ENCODE measurements at regions of chr14 and their contacts with region 1.

Region 1: DNA sequence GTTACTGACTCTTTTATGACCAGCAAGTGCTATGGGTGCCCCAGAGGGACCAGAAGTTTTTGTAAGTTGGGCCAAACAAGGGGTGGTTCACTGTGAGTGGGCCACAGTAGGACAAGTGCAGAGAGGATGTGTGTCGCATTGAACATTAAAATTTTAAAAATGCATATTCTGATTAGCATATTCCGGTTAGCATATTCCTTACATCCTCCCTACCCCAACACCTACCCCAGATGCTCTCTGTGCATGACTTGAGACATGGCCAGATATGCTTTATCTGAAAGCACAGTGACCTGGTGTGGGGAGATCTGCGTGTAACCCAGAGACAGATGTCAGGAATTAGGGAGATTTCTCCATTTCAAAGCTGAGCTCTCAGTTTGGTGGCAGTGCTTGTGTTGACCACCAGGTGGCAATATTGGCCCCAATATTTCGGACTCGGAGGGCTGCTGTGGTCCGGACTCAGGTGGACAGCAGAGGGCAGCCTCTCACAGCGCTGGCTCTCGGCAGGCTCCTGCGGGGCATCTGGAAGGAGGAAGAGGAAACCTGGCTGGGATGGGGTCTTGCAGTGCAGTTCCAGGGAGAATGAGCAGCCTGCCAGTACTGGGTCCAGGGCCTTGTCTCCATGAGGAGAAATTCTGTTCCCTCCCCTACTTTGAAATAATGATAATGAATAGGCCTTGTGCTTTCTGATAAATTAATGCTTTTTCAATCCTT is 1.6 kb upstream of the CEBPE start:
- DNase-seq: peak; percentile 70 to 89
- H3K4me3 ChIP-seq: no peak overlapping the region
- H3K27ac ChIP-seq: no peak overlapping the region
- H3K4me1 ChIP-seq: peaks cover 0 to 11% (median 3%) of the 10 kb centered on the region in 4 experiments; a peak in 5 of 7 replicates
- H3K27me3 ChIP-seq: no peaks in the 10 kb centered on the region
- CTCF ChIP-seq: peak; percentile 99 to 100 (median 100)
- EP300 ChIP-seq: peak in 1 of 2 experiments; percentile 22; a peak in 1 of 3 replicates
- POLR2A ChIP-seq: no peak
- RAD21 ChIP-seq: peak; percentile 100

Region 2: DNA sequence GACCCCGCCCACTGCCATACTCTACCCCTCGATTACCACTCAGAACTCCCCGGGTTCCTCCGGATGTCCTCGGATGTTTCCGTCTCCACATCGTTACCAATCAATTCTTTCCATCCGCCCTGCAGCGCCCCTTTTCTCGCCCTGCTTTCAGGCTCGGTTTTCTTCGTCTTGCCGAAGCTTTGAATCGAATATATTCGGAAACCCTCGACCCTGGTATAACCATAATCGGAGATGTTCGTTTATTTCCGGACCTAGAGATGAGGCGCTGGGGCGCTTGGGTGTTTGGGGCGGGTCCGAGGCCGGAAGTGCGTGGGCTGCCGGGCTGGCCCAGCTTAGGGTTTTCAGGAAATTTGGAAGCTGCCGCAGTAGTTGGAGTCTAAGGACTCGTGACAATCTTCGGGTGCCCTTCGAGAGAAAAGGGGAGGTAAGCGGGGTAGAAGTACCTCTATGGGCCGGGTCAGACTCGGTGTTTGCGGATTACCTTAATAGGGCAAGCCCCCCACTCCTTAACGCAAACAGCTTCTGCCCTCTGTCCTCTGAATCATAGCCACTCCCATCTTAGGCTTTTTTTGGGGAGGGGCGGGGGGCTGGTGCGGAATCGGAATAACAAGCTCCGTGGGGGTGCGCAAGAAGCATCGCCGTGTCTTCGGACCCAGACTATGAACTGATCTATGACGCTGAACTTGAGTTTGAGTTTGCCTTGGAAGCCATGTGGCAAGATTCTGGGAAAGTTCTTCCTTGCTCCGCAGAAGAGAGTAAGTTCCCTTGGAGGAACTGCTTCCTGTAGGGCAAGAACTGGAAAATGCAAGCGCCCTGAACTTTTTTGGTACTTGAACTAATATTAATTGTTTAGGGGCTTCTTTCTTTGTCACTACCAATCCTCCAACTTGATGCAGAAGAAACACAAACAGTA is 25.2 kb before region 1 on chr14 and contains the start of gene C14orf119:
- CTCF ChIA-PET with region 1: interaction called, 33 read pairs
- POLR2A ChIA-PET with region 1: interaction called, 13 read pairs
- DNase-seq: peak in 1 of 2 experiments; percentile 96
- H3K4me3 ChIP-seq: peak within 1 kb of the TSS; percentile 92 to 97 (median 96)
- H3K27ac ChIP-seq: peak within 1 kb of the TSS; percentile 99
- H3K4me1 ChIP-seq: no peaks in the 10 kb centered on the region; a peak in 3 of 7 replicates
- H3K27me3 ChIP-seq: no peaks in the 10 kb centered on the region
- CTCF ChIP-seq: no peak
- EP300 ChIP-seq: no peak
- POLR2A ChIP-seq: no peak; a peak in 1 of 3 replicates
- RAD21 ChIP-seq: no peak
- total RNA-seq, gene C14orf119: 78.1 and 91.2 TPM in 2 replicates

Region 3: DNA sequence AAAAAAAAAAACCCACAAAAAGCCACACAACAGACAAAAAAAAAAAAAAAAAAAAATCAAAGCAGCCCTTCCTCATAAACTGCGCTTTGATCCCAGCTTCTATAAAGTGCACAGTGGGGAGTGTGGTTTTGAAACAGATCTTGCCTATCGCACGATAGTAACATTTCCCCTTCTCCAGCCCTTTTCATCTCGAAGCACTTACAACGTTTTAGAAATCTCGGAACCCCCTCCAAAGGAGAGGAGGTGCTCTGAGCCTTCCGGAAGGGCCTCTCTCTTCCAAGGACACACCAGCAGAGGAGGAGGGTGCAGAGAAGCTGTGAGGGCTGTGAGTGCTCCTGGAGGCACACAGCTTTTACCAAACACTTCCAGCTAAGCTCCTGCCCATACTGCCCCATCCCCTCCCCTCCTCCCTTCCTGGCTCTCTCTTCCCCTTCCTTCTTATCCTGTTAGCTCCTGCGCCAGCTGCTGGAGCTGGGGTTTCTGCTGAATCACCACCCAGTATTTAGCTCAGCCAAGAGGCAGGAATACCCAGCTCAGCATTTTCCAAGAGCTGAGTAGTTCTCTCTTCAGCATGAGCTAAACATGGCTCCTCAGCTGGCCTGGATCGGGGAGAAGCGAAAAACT is 34.4 kb after region 1 on chr14:
- CTCF ChIA-PET with region 1: interaction called, 13 read pairs
- POLR2A ChIA-PET with region 1: interaction called, 3 read pairs
- DNase-seq: peak in 1 of 2 experiments; percentile 48
- H3K4me3 ChIP-seq: no peak overlapping the region
- H3K27ac ChIP-seq: 0 out of 2 replicates have a peak overlapping the region, but pooled peaks have one; percentile 8
- H3K4me1 ChIP-seq: peaks cover 11 to 22% (median 15%) of the 10 kb centered on the region in 4 experiments
- H3K27me3 ChIP-seq: no peaks in the 10 kb centered on the region
- CTCF ChIP-seq: no peak
- EP300 ChIP-seq: no peak
- POLR2A ChIP-seq: no peak
- RAD21 ChIP-seq: no peak

Region 4: GRCh38 chr14:23186913-23187654 is 66.4 kb after region 1 on chr14:
- CTCF ChIA-PET with region 1: interaction called, 290 read pairs
- POLR2A ChIA-PET with region 1: interaction called, 8 read pairs
- DNase-seq: peak in 1 of 2 experiments; percentile 51
- H3K4me3 ChIP-seq: no peak overlapping the region
- H3K27ac ChIP-seq: no peak overlapping the region
- H3K4me1 ChIP-seq: peaks cover 0 to 2% (median under 1%) of the 10 kb centered on the region in 4 experiments; a peak in 5 of 7 replicates
- H3K27me3 ChIP-seq: no peaks in the 10 kb centered on the region
- CTCF ChIP-seq: peak in 2 of 3 experiments; percentile 78 to 81; a peak in 3 of 4 replicates
- EP300 ChIP-seq: no peak
- POLR2A ChIP-seq: no peak
- RAD21 ChIP-seq: peak; percentile 85 to 86

Region 5: DNA sequence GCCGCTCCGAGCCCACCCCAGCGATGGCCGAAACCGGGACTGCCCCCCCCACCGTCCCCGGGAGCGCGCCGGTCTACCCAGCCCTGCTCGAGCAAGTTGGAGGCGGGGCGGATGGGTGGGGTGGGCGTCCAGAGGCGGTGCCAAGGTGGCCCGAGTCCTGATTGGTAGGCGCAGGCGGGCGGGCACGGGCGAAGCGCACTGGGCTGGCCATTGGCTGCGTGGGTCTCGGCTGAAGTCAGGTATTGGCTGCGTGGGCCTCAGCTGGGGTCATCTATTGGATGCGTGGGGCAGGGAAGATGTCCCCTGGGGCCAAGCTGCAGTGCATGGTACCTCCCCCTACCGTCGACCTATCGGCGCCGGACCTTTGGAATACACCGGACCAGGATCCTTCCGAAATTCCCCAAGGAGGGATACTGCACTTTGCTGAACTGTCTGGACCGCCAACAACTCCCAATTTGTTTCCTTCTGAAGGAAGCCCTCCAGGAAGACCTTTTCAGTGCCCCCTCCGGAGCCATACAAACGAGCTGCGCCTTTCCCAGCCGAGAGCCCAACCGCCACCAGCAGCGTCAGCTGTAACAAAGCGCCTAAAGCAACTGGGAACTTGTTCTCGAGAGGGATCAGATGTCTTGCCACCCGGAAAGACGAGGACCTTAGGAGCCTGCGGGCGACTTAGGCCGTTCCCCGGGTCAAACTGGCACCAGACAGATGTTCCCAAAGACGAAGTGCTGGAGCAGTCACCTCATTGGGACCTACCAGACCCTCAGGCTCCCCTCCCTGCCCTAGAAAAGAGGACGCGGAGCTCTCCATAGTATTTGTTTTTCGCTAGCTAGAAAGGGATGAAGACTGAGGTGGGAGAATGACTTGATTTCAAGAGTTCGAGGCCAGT is 165.6 kb after region 1 on chr14 and contains the start of gene HOMEZ:
- CTCF ChIA-PET with region 1: interaction called, 10 read pairs
- POLR2A ChIA-PET with region 1: no interaction called
- DNase-seq: peak; percentile 89 to 96
- H3K4me3 ChIP-seq: peak within 1 kb of the TSS; percentile 69 to 98 (median 78)
- H3K27ac ChIP-seq: no peak within 1 kb of the TSS
- H3K4me1 ChIP-seq: no peaks in the 10 kb centered on the region
- H3K27me3 ChIP-seq: peaks cover 9 to 32% (median 28%) of the 10 kb centered on the region in 4 experiments
- CTCF ChIP-seq: peak in 1 of 3 experiments; percentile 17; a peak in 1 of 4 replicates
- EP300 ChIP-seq: no peak
- POLR2A ChIP-seq: peak in 1 of 2 experiments; percentile 50; a peak in 1 of 3 replicates
- RAD21 ChIP-seq: no peak
- total RNA-seq, gene HOMEZ: 9.1 and 9.7 TPM in 2 replicates

Region 6: DNA sequence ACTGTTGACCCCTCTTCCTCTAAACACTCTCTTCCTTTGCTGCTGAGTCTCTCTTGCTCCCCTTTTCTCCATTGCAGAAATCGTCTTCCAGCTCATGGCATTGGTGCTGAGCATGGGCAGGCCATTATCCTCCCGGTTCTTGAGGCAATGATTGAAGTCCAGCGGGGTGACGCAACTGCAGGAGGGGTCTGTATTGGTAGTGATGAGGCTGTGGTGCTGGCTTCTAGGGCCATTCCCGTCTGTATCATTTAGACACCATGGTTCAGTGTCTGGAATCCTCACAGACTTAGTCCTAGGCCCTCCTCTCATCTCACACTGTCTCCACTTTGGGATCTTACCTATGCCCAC is 232.7 kb after region 1 on chr14:
- CTCF ChIA-PET with region 1: no interaction called
- POLR2A ChIA-PET with region 1: no interaction called
- DNase-seq: no peak
- H3K4me3 ChIP-seq: peak overlapping the region in 2 of 4 experiments; percentile 72 to 84; a peak in 2 of 8 replicates
- H3K27ac ChIP-seq: no peak overlapping the region
- H3K4me1 ChIP-seq: peaks cover 0 to 3% (median 2%) of the 10 kb centered on the region in 4 experiments; a peak in 4 of 7 replicates
- H3K27me3 ChIP-seq: peaks cover 0 to 14% (median 10%) of the 10 kb centered on the region in 4 experiments; a peak in 6 of 7 replicates
- CTCF ChIP-seq: no peak
- EP300 ChIP-seq: no peak
- POLR2A ChIP-seq: no peak
- RAD21 ChIP-seq: no peak

Region 7: DNA sequence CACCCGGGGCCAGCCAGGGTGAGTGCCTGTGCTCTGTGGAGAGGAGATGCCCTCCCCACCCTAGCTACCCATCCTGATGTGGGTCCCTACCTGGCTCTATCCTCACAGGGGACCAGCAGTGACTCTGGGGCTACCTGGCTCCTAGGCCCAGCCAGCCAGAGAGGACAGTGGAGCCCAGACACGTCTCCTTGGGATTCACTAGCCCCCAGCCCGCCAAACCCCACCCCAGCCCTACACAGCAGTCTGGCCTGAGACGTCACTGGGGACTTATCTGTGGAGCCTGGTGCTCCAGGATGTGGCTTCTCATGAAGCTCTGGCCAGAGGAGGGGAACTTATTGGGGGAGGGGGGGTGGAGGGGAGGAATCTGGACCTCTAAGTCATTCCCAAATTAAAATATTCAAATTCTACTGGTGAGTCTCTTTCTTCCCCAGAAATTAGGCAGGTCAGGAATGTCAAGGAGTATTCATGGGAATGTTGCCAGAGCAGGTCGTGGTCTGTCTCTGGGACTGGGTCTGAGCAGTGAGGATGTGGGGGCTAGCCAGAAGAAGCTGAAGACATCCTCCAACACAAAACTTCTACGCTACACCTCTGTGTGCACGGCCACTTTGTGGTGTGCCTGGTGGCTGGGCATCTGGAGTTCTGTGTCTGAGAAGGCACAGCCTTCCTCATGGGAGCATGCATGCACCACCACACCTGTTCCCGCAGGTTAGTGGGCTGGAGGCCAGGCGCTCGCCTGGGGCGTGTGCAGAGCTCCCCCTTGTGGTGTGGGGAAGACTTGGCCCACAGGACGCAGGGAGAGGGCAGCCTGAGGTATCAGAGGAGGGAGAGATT is 258.9 kb after region 1 on chr14:
- CTCF ChIA-PET with region 1: interaction called, 10 read pairs
- POLR2A ChIA-PET with region 1: no interaction called
- DNase-seq: peak in 1 of 2 experiments; percentile 81
- H3K4me3 ChIP-seq: no peak overlapping the region
- H3K27ac ChIP-seq: no peak overlapping the region
- H3K4me1 ChIP-seq: peaks cover 0 to 12% (median 4%) of the 10 kb centered on the region in 4 experiments; a peak in 3 of 7 replicates
- H3K27me3 ChIP-seq: peaks cover 0 to 23% (median 11%) of the 10 kb centered on the region in 4 experiments; a peak in 6 of 7 replicates
- CTCF ChIP-seq: peak; percentile 92 to 97 (median 95)
- EP300 ChIP-seq: no peak
- POLR2A ChIP-seq: no peak
- RAD21 ChIP-seq: peak; percentile 95

Measured in H1 (cell line).